Activated T-helper 2 cell treated with anti-CD3 and anti-CD28 coated beads, Interferon-gamma antibody, Interleukin-2, Interleukin-4, amounts not matched to agents 10 μg/mL and 5 μg/mL and 100 μg/mL, durations not matched to agents 14 hours and 24 hours and 36 hours (primary cell): ENCODE measurements at regions of chr2 and their contacts with region 1.

Region 1: DNA sequence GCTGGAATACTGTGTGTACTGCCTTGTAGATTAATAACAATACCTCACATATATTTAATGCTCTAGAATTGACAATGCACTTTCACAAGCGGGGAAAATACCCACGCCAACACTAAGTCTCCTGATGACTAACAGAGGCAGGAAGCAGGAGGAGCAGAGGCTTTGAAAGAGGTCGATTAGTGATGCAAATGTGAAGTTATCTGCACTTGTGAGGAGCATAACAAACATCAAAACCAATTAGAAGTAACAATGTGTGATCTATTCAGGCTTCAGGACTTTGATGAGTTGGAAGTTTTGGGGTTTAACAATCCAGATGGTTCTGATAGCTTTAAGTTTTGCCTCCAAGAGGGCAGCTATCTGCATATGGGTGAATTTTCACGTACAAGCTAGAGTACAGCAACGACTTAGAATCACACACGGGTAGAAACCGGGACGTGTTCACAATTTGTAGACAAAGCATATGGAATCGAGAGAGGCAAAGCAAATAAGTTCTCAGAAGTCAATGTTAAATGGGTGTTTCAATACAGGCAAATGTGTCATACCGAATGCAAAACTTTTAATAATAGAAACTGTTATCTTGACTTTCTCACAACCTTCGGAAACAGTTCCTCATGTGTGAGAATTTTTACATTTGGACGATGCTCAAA is 114.5 kb downstream of the METTL8 start:
- DNase-seq: peak; percentile 32
- H3K4me3 Mint-ChIP-seq: peak overlapping the region; percentile 56
- H3K27ac Mint-ChIP-seq: peak overlapping the region; percentile 99
- H3K4me1 Mint-ChIP-seq: peaks cover 56% of the 10 kb centered on the region
- H3K27me3 Mint-ChIP-seq: no peaks in the 10 kb centered on the region

Region 2: DNA sequence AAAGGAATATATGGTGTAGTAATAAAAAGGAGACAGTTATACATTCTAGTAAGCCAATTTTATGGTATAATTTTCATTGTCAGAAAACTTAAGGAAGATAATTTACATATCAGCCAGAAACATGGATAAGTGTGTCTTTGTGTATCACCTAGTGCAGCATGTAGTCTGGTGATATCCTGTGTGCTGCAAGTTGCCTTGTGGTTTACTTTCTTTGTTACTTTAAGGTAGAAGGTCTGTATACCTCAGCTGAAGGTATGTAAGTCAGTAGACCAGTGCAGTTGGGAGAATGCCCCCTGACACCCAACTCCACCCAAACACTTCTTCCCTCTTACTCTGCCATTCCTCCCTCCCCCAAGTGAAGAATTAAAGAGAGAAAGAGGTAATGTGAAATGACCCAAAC is 379.2 kb before region 1 on chr2:
- intact Hi-C with region 1: no loop called
- DNase-seq: no peak
- H3K4me3 Mint-ChIP-seq: no peak overlapping the region
- H3K27ac Mint-ChIP-seq: no peak overlapping the region
- H3K4me1 Mint-ChIP-seq: peaks cover 30% of the 10 kb centered on the region
- H3K27me3 Mint-ChIP-seq: no peaks in the 10 kb centered on the region

Region 3: DNA sequence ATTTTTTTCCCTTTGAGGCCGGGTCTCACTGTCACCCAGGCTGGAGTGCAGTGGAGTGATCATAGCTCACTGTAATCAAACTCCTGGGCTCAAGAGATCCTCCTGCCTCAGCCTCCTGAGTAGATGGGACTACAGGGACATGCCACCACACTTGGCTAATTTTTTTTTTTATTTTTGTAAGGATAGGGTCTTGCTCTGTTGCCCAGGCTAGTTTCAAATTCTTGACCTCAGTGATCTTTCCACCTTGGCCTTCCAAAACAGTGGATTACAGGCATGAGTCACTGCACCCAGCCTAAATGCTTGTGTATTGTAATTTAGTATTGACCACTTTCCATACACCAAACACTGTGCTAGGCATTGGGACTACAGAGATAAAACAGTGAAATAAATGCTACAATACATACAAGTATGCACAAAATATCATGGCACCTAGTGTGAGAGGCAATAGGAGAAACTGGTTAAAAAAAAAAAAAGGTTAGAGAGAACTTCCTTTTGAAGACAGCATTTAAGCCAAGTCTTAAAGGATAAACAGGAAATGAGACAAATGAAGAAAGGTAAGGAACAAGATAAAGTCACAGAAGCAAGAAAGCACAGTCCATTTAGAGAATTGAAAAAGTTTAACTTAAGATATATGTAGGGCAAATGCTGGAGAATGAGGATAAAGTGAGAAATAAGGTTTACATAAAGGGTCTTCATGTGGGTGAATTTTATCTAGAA is 276.9 kb before region 1 on chr2:
- intact Hi-C with region 1: loop called (anchors 1 kb)
- DNase-seq: no peak
- H3K4me3 Mint-ChIP-seq: peak overlapping the region; percentile 10
- H3K27ac Mint-ChIP-seq: peak overlapping the region; percentile 79
- H3K4me1 Mint-ChIP-seq: peaks cover 27% of the 10 kb centered on the region
- H3K27me3 Mint-ChIP-seq: no peaks in the 10 kb centered on the region

Region 4: DNA sequence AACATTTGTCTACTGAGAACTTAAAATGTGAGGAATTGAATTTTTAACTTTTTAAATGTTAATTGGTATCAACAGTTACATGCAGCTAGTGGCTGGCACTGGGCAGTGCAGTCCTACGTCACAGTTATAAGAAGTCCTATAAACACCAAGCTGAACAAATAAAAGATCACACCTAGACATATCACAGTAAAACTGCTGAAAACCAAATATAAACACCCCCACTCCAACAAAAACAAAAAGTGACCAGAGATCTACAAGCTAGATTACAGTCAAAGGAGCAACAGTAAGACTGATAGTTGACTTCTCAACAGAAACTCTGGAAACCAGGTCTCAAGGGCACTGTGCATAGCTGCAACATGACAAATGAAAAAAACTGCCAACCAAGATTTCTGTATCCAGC is 178.0 kb before region 1 on chr2:
- intact Hi-C with region 1: loop called (anchors 5 kb)
- DNase-seq: no peak
- H3K4me3 Mint-ChIP-seq: no peak overlapping the region
- H3K27ac Mint-ChIP-seq: no peak overlapping the region
- H3K4me1 Mint-ChIP-seq: peaks cover 52% of the 10 kb centered on the region
- H3K27me3 Mint-ChIP-seq: no peaks in the 10 kb centered on the region

Region 5: DNA sequence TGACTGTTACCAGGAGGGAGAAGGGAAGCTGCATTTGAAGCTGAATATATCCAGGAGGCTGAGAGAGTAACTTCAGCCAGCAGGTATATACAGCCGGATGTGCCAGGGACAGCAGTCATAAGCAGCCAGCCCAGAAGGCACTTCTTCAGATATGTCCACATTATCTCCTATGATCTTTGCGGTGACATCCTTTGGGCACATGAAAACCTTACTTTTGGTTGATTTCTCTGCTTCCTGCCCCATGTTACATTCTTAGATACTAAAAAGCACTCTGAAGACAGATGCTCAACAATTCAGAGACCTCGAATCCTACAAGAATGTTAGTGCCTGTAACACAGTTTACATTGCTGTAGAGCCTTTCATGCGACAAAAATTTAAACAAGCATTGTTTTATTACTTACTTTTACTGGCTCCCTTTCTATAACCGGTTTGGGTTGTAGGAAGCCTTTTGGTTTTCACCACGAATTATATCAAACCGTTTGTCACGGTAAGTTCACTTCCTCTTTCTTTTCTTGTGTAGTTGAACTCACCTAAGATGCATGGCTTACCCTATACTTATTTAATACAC is 108.3 kb before region 1 on chr2:
- intact Hi-C with region 1: loop called (anchors 1 kb)
- DNase-seq: peak; percentile 54
- H3K4me3 Mint-ChIP-seq: peak overlapping the region; percentile 45
- H3K27ac Mint-ChIP-seq: peak overlapping the region; percentile 75
- H3K4me1 Mint-ChIP-seq: peaks cover 38% of the 10 kb centered on the region
- H3K27me3 Mint-ChIP-seq: no peaks in the 10 kb centered on the region

Region 6: GRCh38 chr2:171347591-171348032 is 28.3 kb after region 1 on chr2:
- intact Hi-C with region 1: loop called (anchors 1 kb)
- DNase-seq: no peak
- H3K4me3 Mint-ChIP-seq: no peak overlapping the region
- H3K27ac Mint-ChIP-seq: peak overlapping the region; percentile 11
- H3K4me1 Mint-ChIP-seq: peaks cover 24% of the 10 kb centered on the region
- H3K27me3 Mint-ChIP-seq: no peaks in the 10 kb centered on the region